ENCODE measurements at regions of chr10 and their contacts with region 1.

Region 1: DNA sequence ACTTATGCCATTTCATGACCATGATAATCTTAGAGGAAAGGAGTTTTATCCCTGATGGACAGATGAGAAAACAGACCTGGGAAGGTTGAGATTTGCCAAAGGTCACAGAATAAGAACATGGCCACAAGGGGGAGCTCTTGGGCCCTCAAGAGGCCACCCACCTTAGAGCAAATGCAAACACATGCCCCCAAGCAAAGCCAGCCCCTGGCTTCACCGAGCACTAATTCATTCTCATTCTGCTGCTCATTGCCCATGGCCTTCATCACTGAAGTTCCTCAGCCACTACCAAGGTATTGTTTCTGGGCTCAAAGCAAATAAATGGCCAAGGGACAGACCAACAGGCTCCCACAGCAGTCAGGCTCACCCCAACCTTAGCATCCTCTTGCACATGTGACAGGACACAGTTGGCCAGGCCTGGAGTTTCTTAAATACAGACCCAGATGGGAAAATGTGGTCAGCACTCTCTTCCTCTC is 44.2 kb downstream of the PDLIM1 start:
- DNase-seq: peak; percentile 83
- ATAC-seq: peak; percentile 52
- H3K4me3 Mint-ChIP-seq: no peak overlapping the region
- H3K27ac Mint-ChIP-seq: no peak overlapping the region
- H3K4me1 Mint-ChIP-seq: no peaks in the 10 kb centered on the region
- H3K27me3 Mint-ChIP-seq: peaks cover 8% of the 10 kb centered on the region

Region 2: GRCh38 chr10:94630017-94630688 is 616.5 kb before region 1 on chr10:
- CTCF ChIA-PET with region 1: interaction called, 3 read pairs
- POLR2A ChIA-PET with region 1: no interaction called
- intact Hi-C with region 1: loop called in 1 of 2 experiments (anchors 2 kb)
- DNase-seq: no peak
- ATAC-seq: no peak
- H3K4me3 Mint-ChIP-seq: no peak overlapping the region
- H3K27ac Mint-ChIP-seq: no peak overlapping the region
- H3K4me1 Mint-ChIP-seq: no peaks in the 10 kb centered on the region
- H3K27me3 Mint-ChIP-seq: peaks cover 6% of the 10 kb centered on the region

Region 3: GRCh38 chr10:94645285-94645684 is 601.3 kb before region 1 on chr10:
- CTCF ChIA-PET with region 1: no interaction called
- POLR2A ChIA-PET with region 1: no interaction called
- intact Hi-C with region 1: no loop called
- DNase-seq: no peak
- ATAC-seq: no peak
- H3K4me3 Mint-ChIP-seq: no peak overlapping the region
- H3K27ac Mint-ChIP-seq: no peak overlapping the region
- H3K4me1 Mint-ChIP-seq: no peaks in the 10 kb centered on the region
- H3K27me3 Mint-ChIP-seq: peaks cover 2% of the 10 kb centered on the region

Region 4: GRCh38 chr10:95133016-95133752 is 113.4 kb before region 1 on chr10:
- CTCF ChIA-PET with region 1: interaction called, 39 read pairs
- POLR2A ChIA-PET with region 1: no interaction called
- intact Hi-C with region 1: loop called (anchors 1 kb)
- DNase-seq: peak; percentile 90
- ATAC-seq: peak; percentile 87
- H3K4me3 Mint-ChIP-seq: no peak overlapping the region
- H3K27ac Mint-ChIP-seq: no peak overlapping the region
- H3K4me1 Mint-ChIP-seq: no peaks in the 10 kb centered on the region
- H3K27me3 Mint-ChIP-seq: no peaks in the 10 kb centered on the region

Region 5: GRCh38 chr10:95183271-95184230 is 63.1 kb before region 1 on chr10:
- CTCF ChIA-PET with region 1: interaction called, 47 read pairs
- POLR2A ChIA-PET with region 1: no interaction called
- intact Hi-C with region 1: loop called (anchors 1 kb)
- DNase-seq: peak; percentile 88
- ATAC-seq: peak; percentile 96
- H3K4me3 Mint-ChIP-seq: peak overlapping the region; percentile 62
- H3K27ac Mint-ChIP-seq: no peak overlapping the region
- H3K4me1 Mint-ChIP-seq: peaks cover 3% of the 10 kb centered on the region
- H3K27me3 Mint-ChIP-seq: peaks cover 18% of the 10 kb centered on the region

Region 6: DNA sequence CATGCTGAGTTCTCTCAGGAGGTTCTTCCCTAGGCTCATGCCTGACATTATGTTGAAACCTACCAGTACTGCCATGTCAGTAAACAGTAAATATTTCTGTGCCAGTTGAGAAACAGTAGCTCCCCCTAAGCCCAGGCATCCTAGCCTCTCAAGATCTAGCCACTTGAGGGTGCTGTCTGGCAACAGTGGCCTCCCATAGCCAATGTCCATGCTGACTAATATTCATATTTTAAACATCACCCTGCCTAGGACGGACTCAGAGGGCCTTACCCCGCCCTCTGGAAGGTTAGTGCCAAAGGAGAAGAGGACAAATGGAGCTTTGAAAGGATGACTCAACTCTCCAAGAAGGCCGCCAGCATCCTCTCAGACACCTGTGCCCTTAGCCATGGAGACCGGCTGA is 44.9 kb before region 1 on chr10:
- CTCF ChIA-PET with region 1: interaction called, 14 read pairs
- POLR2A ChIA-PET with region 1: no interaction called
- intact Hi-C with region 1: no loop called
- DNase-seq: no peak
- ATAC-seq: no peak
- H3K4me3 Mint-ChIP-seq: no peak overlapping the region
- H3K27ac Mint-ChIP-seq: no peak overlapping the region
- H3K4me1 Mint-ChIP-seq: no peaks in the 10 kb centered on the region
- H3K27me3 Mint-ChIP-seq: no peaks in the 10 kb centered on the region

Region 7: DNA sequence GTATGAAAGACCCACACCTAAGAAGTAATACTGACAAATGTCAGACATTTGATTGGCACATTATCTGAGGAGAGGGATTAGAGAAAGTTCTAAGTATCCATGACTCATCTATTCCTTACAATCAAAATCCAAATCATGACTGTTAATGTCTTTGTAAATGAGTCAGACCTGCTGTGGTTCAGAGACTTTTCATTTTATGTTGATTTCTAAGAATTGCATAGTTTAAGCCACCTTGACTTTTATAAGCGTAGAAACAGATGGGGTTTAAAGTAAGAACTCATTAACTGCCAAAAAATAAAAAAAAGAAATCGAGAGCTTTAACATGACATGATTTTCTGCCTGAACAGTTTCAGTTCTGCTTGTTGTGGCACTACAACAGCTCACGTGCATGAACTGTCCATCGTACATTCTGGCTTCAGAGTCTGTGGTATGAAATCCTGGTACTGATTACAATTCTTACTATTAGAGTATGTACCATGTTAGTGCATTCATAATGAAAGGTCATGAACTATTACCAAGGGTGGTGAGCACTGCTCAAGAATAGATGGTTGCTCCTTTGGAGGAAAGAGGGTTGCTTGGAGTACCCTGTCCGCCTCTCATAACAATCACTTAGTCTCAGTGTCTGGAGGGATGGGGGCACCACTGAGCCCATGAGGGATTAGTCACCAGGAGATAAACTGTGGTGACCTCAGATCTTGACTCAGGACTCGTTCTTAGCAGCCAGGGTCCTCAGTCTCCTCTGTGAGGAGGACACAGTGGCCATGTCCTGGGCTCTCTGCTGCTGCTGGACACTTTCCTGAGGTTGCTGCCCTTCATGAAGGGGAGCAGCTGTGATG is 10.3 kb before region 1 on chr10:
- CTCF ChIA-PET with region 1: interaction called, 15 read pairs
- POLR2A ChIA-PET with region 1: no interaction called
- intact Hi-C with region 1: no loop called
- DNase-seq: peak; percentile 56
- ATAC-seq: peak; percentile 87
- H3K4me3 Mint-ChIP-seq: peak overlapping the region; percentile 19
- H3K27ac Mint-ChIP-seq: peak overlapping the region; percentile 85
- H3K4me1 Mint-ChIP-seq: peaks cover 29% of the 10 kb centered on the region
- H3K27me3 Mint-ChIP-seq: peaks cover 15% of the 10 kb centered on the region

Region 8: GRCh38 chr10:95363303-95363912 is 116.8 kb after region 1 on chr10:
- CTCF ChIA-PET with region 1: interaction called, 152 read pairs
- POLR2A ChIA-PET with region 1: no interaction called
- intact Hi-C with region 1: loop called (anchors 1 kb)
- DNase-seq: peak; percentile 61
- ATAC-seq: peak; percentile 70
- H3K4me3 Mint-ChIP-seq: no peak overlapping the region
- H3K27ac Mint-ChIP-seq: no peak overlapping the region
- H3K4me1 Mint-ChIP-seq: no peaks in the 10 kb centered on the region
- H3K27me3 Mint-ChIP-seq: peaks cover 7% of the 10 kb centered on the region